Breast epithelium (tissue), 4 donors: ENCODE measurements at regions of chr13 and their contacts with region 1.

Region 1: GRCh38 chr13:68727165-68727564 is 1380.5 kb upstream of the ATXN8OS start:
- DNase-seq: no peak
- H3K4me3 ChIP-seq: no peak overlapping the region
- H3K27ac ChIP-seq: no peak overlapping the region
- H3K4me1 ChIP-seq: no peaks in the 10 kb centered on the region
- H3K27me3 ChIP-seq: no peaks in the 10 kb centered on the region
- CTCF ChIP-seq: no peak
- POLR2A ChIP-seq: no peak

Region 2: DNA sequence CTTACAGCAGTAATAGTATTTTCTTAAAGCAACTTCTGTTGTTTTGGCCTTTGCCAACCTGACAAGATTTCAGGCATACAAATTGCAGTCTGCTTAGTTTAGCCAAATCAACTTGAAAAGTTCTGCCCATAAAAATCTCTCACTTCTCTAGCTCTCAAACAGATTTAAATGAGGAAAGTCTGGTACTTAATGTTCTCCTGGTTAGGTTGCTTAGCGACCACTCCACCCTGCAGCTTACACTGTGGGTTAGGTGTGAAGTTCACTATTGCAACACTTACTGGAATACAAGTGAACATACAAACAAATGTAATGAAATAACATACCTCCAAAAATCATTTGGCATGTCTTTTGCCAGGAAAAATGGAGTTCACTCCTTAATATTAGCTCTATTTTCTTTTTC is 1318.4 kb before region 1 on chr13:
- intact Hi-C with region 1: no loop called
- DNase-seq: no peak
- H3K4me3 ChIP-seq: no peak overlapping the region
- H3K27ac ChIP-seq: no peak overlapping the region
- H3K4me1 ChIP-seq: no peaks in the 10 kb centered on the region
- H3K27me3 ChIP-seq: no peaks in the 10 kb centered on the region
- CTCF ChIP-seq: no peak
- POLR2A ChIP-seq: no peak

Region 3: GRCh38 chr13:69213331-69213850 is 486.2 kb after region 1 on chr13:
- intact Hi-C with region 1: no loop called
- DNase-seq: no peak
- H3K4me3 ChIP-seq: no peak overlapping the region
- H3K27ac ChIP-seq: no peak overlapping the region
- H3K4me1 ChIP-seq: no peaks in the 10 kb centered on the region
- H3K27me3 ChIP-seq: no peaks in the 10 kb centered on the region
- CTCF ChIP-seq: no peak
- POLR2A ChIP-seq: no peak

Region 4: DNA sequence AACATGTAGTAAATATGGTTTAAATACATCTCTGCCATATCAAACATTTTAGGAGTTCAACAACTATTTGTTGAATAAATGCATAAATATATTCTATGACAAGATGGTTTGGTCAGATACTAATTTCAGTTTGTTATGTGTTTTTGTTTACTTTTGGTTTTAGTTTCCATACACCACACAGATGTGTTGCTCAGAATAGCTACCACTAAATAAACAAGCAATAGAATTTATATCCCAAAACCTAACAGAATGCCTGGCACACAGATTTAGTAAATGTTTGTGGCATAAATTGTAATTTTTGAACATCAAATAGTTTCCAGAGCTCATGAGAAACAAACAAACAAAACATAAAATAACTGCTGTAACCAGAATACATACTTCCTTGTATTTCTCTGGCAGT is 1253.6 kb after region 1 on chr13:
- intact Hi-C with region 1: loop called (anchors 10 kb)
- DNase-seq: no peak
- H3K4me3 ChIP-seq: no peak overlapping the region
- H3K27ac ChIP-seq: no peak overlapping the region
- H3K4me1 ChIP-seq: no peaks in the 10 kb centered on the region
- H3K27me3 ChIP-seq: no peaks in the 10 kb centered on the region
- CTCF ChIP-seq: no peak
- POLR2A ChIP-seq: no peak

Region 5: GRCh38 chr13:70457475-70457874 is 1730.3 kb after region 1 on chr13:
- intact Hi-C with region 1: no loop called
- DNase-seq: no peak
- H3K4me3 ChIP-seq: no peak overlapping the region
- H3K27ac ChIP-seq: no peak overlapping the region
- H3K4me1 ChIP-seq: no peaks in the 10 kb centered on the region
- H3K27me3 ChIP-seq: no peaks in the 10 kb centered on the region
- CTCF ChIP-seq: no peak
- POLR2A ChIP-seq: no peak